ENCODE measurements at regions of chr4 and their contacts with region 1.

Region 1: DNA sequence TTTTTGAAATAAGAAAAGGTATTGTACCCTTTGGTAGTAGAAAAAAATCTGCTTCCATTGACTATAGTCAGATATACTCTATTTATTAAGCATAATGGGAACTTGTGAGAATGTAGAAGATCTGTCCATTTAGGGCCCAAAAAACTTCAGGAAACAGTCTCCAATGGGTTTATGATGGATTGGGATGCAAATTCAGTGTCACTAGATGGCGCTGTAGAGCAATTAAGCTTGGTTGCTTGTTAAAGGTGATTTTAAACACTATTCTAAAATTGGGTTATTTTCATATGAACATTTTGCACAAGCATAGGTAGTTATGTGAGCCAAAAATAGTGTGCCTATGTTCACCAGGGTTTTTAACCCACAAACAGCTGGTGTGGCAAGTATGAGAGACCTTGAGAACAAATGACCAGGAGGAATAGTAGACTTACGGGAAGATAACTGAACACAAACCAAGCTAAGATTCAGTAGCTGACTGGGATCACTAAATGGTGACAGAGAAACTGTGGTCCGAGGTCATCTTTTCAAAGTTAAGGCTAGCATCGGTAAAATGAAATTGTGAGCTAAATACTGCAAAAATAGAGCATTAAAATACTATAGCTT is 80.3 kb upstream of the LSM6 start:
- DNase-seq: peak in 1 of 2 experiments; percentile 48
- H3K4me3 ChIP-seq: no peak overlapping the region
- H3K4me3 Mint-ChIP-seq: no peak overlapping the region
- H3K27ac Mint-ChIP-seq: no peak overlapping the region
- H3K4me1 ChIP-seq: no peaks in the 10 kb centered on the region
- H3K4me1 Mint-ChIP-seq: no peaks in the 10 kb centered on the region
- H3K27me3 ChIP-seq: no peaks in the 10 kb centered on the region
- H3K27me3 Mint-ChIP-seq: peaks cover 8% of the 10 kb centered on the region
- CTCF ChIP-seq: peak; percentile 62 to 65

Region 2: DNA sequence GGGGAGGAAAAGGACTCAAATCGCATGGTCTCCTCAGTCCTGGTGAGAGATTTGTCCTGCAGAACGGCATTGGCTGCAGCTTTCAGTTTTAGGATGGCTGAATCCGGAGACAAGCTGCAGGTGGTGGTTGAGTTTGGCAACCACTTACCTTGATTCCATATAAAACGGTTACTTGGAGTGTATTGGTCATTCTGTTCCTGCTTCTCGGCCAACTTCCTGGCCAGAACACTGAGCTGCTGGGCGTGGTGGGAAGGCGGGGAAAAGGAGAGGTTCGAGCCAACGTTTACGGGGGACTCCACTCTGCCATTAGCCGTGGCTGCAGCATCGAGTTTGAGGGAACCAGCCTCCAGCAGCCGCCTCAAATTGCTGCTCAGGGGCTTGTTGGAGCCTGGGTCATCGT is 192.7 kb before region 1 on chr4:
- CTCF ChIA-PET with region 1: no interaction called
- POLR2A ChIA-PET with region 1: no interaction called
- intact Hi-C with region 1: no loop called
- DNase-seq: no peak
- H3K4me3 ChIP-seq: no peak overlapping the region
- H3K4me3 Mint-ChIP-seq: no peak overlapping the region
- H3K27ac Mint-ChIP-seq: no peak overlapping the region
- H3K4me1 ChIP-seq: no peaks in the 10 kb centered on the region
- H3K4me1 Mint-ChIP-seq: no peaks in the 10 kb centered on the region
- H3K27me3 ChIP-seq: no peaks in the 10 kb centered on the region
- H3K27me3 Mint-ChIP-seq: no peaks in the 10 kb centered on the region
- CTCF ChIP-seq: no peak

Region 3: GRCh38 chr4:146191766-146192458 is 96.7 kb after region 1 on chr4:
- CTCF ChIA-PET with region 1: no interaction called
- POLR2A ChIA-PET with region 1: no interaction called
- intact Hi-C with region 1: loop called (anchors 10 kb)
- DNase-seq: peak; percentile 50 to 68
- H3K4me3 ChIP-seq: no peak overlapping the region
- H3K4me3 Mint-ChIP-seq: no peak overlapping the region
- H3K27ac Mint-ChIP-seq: no peak overlapping the region
- H3K4me1 ChIP-seq: peaks cover 12% of the 10 kb centered on the region
- H3K4me1 Mint-ChIP-seq: peaks cover 10% of the 10 kb centered on the region
- H3K27me3 ChIP-seq: no peaks in the 10 kb centered on the region
- H3K27me3 Mint-ChIP-seq: no peaks in the 10 kb centered on the region
- CTCF ChIP-seq: no peak

Region 4: DNA sequence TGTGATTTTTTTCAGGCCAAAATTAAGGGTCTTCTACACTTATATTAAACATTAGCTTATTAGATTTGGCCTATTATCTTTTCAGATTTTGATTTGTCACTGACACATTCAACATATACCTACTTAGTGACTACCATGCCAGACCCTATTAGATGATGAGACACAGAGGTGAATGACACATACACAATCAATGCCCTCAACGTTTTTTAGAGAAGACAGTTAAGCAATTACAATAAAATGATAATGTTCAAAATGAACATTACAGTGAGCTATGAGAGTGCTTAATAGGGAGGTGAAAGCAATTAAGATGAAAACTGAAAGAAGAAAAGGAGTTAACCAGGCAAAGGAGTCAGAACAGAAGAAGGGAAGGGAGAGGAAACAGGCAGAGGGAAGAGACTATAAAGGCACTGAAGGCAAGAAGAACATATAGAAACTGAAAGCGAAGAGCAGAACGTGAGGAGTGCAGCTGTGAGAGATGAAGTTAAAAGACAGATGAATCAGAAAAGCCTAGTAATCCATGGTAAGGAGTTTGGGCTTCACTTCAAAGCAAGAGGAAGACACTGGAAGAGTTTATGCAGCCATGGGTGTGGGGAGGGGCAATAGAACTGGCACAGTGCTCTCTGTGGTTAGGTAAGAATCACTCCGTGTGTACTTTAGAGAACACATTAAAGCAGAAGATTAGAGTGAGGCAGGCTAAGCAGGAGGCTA is 238.2 kb after region 1 on chr4:
- CTCF ChIA-PET with region 1: no interaction called
- POLR2A ChIA-PET with region 1: no interaction called
- intact Hi-C with region 1: loop called (anchors 10 kb)
- DNase-seq: no peak
- H3K4me3 ChIP-seq: no peak overlapping the region
- H3K4me3 Mint-ChIP-seq: no peak overlapping the region
- H3K27ac Mint-ChIP-seq: no peak overlapping the region
- H3K4me1 ChIP-seq: peaks cover 11% of the 10 kb centered on the region; the same call in 1 of the 2 replicates
- H3K4me1 Mint-ChIP-seq: peaks cover 9% of the 10 kb centered on the region
- H3K27me3 ChIP-seq: no peaks in the 10 kb centered on the region
- H3K27me3 Mint-ChIP-seq: no peaks in the 10 kb centered on the region
- CTCF ChIP-seq: no peak

Measured in Caco-2 (cell line).